ENCODE measurements at regions of chr12 and their contacts with region 1.

Region 1: GRCh38 chr12:117897372-117898161 is 71.2 kb downstream of the KSR2 start:
- DNase-seq: no peak
- H3K4me3 ChIP-seq: no peak overlapping the region
- CTCF ChIP-seq: no peak

Region 2: DNA sequence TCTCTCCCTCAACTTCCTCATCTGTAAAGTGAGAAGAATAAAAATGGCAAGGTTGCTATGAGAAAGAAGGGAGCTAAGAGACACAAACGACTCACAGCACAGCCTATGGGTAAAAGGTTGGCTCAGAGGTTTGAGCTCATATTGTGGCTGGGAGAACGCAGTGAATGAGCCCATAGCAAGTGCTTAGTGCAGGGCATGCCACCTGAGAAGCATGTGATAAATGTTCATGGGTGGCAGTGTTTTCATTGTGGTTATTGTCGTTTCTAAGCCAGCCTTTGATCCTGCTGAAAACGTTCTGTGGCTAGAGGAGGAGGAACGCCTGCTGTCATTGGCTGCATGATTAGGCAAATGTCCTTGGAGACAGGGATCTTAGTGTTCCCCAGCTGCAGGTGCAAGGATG is 79.2 kb before region 1 on chr12:
- in situ Hi-C with region 1: no loop called
- DNase-seq: no peak
- H3K4me3 ChIP-seq: no peak overlapping the region
- CTCF ChIP-seq: no peak

Region 3: GRCh38 chr12:117998719-117999118 is 101.2 kb after region 1 on chr12:
- in situ Hi-C with region 1: loop called (anchors 5 kb)
- DNase-seq: no peak
- H3K4me3 ChIP-seq: no peak overlapping the region
- CTCF ChIP-seq: no peak

Region 4: GRCh38 chr12:118206107-118206412 is 308.5 kb after region 1 on chr12:
- in situ Hi-C with region 1: no loop called
- DNase-seq: no peak
- H3K4me3 ChIP-seq: no peak overlapping the region
- CTCF ChIP-seq: no peak